HepG2 (cell line): ENCODE measurements at regions of chr12 and their contacts with region 1.

Region 1: GRCh38 chr12:50825372-50825838 is 17.3 kb upstream of the TMPRSS12 start:
- DNase-seq: peak; percentile 62
- ATAC-seq: peak; percentile 42
- H3K4me3 ChIP-seq: peak overlapping the region in 2 of 3 experiments; percentile 21 to 24; a peak in 2 of 6 replicates
- H3K27ac ChIP-seq: peak overlapping the region; percentile 47
- H3K4me1 ChIP-seq: peaks cover 22% of the 10 kb centered on the region
- H3K27me3 ChIP-seq: no peaks in the 10 kb centered on the region
- CTCF ChIP-seq: peak; percentile 58
- EP300 ChIP-seq: no peak
- POLR2A ChIP-seq: no peak
- RAD21 ChIP-seq: no peak; the same call in 1 of the 2 replicates

Region 2: GRCh38 chr12:50708631-50709030 is 116.8 kb before region 1 on chr12:
- CTCF ChIA-PET with region 1: no interaction called
- POLR2A ChIA-PET with region 1: no interaction called
- in situ Hi-C with region 1: no loop called
- intact Hi-C with region 1: no loop called
- DNase-seq: no peak
- ATAC-seq: no peak
- H3K4me3 ChIP-seq: no peak overlapping the region
- H3K27ac ChIP-seq: no peak overlapping the region
- H3K4me1 ChIP-seq: no peaks in the 10 kb centered on the region
- H3K27me3 ChIP-seq: no peaks in the 10 kb centered on the region
- CTCF ChIP-seq: no peak
- EP300 ChIP-seq: no peak
- POLR2A ChIP-seq: no peak
- RAD21 ChIP-seq: no peak

Region 3: GRCh38 chr12:50924439-50925341 is 99.3 kb after region 1 on chr12:
- CTCF ChIA-PET with region 1: no interaction called
- POLR2A ChIA-PET with region 1: interaction called, 6 read pairs
- in situ Hi-C with region 1: no loop called
- intact Hi-C with region 1: loop called (anchors 5 kb)
- DNase-seq: peak; percentile 89
- ATAC-seq: peak; percentile 87
- H3K4me3 ChIP-seq: peak overlapping the region; percentile 70 to 85 (median 85)
- H3K27ac ChIP-seq: peak overlapping the region; percentile 82
- H3K4me1 ChIP-seq: peaks cover 48% of the 10 kb centered on the region
- H3K27me3 ChIP-seq: peaks cover 0 to 3% of the 10 kb centered on the region in 2 experiments; a peak in 1 of 5 replicates
- CTCF ChIP-seq: no peak
- EP300 ChIP-seq: 0 out of 4 replicates have a peak, but pooled peaks of 1 of the 2 experiments have one; percentile 8
- POLR2A ChIP-seq: peak; percentile 17 to 37; a peak in 2 of 4 replicates
- RAD21 ChIP-seq: no peak

Region 4: DNA sequence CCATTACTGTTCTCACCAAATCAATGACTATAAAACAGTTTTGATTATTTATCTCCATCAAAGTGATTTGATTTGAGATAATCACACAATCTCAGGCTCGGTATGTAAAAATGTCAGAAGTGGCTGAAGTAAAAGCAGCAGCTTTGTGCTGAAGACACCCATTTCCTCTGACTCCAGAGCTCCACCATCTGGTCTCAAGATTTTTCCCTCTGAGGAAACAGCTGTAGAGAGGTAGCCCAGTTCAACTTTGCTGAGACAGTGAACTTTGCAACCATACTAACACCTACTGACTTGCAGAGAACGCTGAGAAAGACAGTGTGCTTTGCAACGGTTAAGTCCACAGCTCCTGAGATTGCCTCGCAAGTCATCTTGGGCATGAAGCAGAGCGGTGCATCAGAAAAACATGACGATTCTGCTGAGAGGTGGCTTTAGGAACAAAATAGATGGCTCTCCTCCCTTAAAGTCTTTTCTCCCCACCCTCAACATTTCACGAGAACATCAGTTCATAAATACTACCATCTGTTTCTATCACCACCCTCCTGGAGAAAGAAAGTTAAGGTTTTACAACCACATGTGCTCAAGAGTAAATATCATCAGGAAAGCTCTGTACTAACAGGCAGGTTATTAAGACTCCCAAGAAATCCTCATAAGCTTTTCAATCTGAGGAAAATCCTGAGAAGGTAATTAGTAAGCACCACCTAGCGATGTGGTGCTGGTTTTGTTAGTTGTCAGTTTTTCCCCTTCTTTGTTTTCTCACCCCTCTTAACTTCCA is 161.7 kb after region 1 on chr12:
- CTCF ChIA-PET with region 1: interaction called, 17 read pairs
- POLR2A ChIA-PET with region 1: interaction called, 7 read pairs
- in situ Hi-C with region 1: loop called (anchors 5 kb)
- intact Hi-C with region 1: loop called (anchors 1 kb)
- DNase-seq: peak; percentile 46
- ATAC-seq: peak; percentile 91
- H3K4me3 ChIP-seq: no peak overlapping the region
- H3K27ac ChIP-seq: no peak overlapping the region
- H3K4me1 ChIP-seq: peaks cover 23% of the 10 kb centered on the region
- H3K27me3 ChIP-seq: no peaks in the 10 kb centered on the region
- CTCF ChIP-seq: peak; percentile 87
- EP300 ChIP-seq: no peak
- POLR2A ChIP-seq: no peak
- RAD21 ChIP-seq: peak; percentile 71

Region 5: DNA sequence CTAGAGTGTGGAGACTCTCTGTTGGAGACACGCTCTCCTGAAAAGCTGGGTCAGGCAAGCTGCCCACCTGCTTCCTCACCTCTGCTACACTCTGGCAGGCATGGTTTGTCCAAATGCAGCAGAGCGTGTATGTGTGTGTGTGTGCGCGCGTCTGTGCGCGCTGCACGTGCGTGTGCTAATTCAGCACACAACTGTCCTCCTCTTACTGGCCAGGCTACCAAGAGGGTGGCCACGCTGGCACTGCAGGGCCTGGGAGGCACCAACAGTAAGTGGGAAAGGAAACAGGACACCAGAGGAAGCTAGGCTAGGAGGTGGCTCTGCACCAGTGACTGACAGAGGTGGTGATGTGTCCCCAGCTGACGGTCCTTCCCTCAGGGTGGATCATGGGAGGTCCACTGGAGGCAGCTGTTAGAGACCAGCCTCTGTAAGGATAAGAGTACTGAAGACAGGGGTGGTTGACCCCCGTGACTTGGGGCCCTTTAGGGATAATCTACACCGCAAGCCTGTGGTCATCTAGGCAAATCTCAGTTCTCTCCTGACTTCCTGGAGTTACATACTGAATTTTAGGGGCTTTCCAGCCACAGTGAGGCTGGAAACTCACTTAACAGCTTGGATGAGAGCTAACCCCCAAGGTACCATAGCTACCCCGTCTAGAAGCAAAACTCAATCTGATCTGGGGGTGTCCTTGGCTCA is 363.1 kb after region 1 on chr12:
- CTCF ChIA-PET with region 1: no interaction called
- POLR2A ChIA-PET with region 1: no interaction called
- in situ Hi-C with region 1: no loop called
- intact Hi-C with region 1: no loop called
- DNase-seq: no peak
- ATAC-seq: peak; percentile 35
- H3K4me3 ChIP-seq: no peak overlapping the region
- H3K27ac ChIP-seq: no peak overlapping the region
- H3K4me1 ChIP-seq: peaks cover 48% of the 10 kb centered on the region
- H3K27me3 ChIP-seq: peaks cover 0 to 14% of the 10 kb centered on the region in 2 experiments; a peak in 2 of 5 replicates
- CTCF ChIP-seq: no peak
- EP300 ChIP-seq: no peak
- POLR2A ChIP-seq: no peak
- RAD21 ChIP-seq: no peak

Region 6: GRCh38 chr12:51205350-51205749 is 379.9 kb after region 1 on chr12:
- CTCF ChIA-PET with region 1: no interaction called
- POLR2A ChIA-PET with region 1: no interaction called
- in situ Hi-C with region 1: no loop called
- intact Hi-C with region 1: no loop called
- DNase-seq: no peak
- ATAC-seq: no peak
- H3K4me3 ChIP-seq: no peak overlapping the region
- H3K27ac ChIP-seq: no peak overlapping the region
- H3K4me1 ChIP-seq: peaks cover 17% of the 10 kb centered on the region
- H3K27me3 ChIP-seq: 0 out of 5 replicates have a peak, but pooled peaks cover 0 to 4% of the 10 kb centered on the region in 2 experiments
- CTCF ChIP-seq: no peak
- EP300 ChIP-seq: no peak
- POLR2A ChIP-seq: no peak
- RAD21 ChIP-seq: no peak